ENCODE measurements at regions of chr2 and their contacts with region 1.

Region 1: DNA sequence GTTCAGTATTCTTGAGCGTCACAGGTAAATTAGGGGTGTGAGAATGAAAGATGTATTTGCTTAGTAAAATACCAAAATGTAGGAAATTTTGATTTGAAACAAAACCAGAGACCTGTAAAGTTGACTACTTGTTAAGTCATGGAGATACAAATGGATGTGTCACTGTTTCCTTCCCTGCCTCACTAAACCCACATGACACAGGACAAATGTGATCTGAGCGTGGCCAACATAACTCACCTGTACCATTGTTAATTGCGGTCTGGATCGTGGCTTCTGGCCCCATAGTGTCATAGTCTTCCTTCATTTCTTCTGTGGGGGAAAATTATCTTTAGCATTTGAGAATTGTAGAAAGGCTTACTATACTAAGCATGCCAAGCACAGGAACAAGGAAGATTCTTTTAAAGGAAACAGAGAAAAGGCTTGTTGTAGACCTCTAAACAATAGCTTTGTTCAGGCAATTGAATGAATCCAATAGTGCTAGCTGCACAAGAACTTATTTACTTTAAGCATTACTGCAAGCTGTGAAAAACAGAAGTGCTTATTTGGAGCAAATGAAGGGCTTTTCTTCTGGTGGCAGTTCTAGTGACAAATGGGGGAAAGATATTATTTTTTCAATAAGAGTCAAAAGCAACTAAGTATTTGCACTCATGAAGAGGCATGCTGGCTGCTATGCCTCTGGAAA is 95.2 kb downstream of the ZEB2 start:
- DNase-seq: no peak
- H3K4me3 ChIP-seq: no peak overlapping the region
- CTCF ChIP-seq: no peak
- POLR2A ChIP-seq: no peak

Region 2: GRCh38 chr2:144402251-144402650 is 22.4 kb before region 1 on chr2:
- intact Hi-C with region 1: loop called (anchors 1 kb)
- DNase-seq: no peak
- H3K4me3 ChIP-seq: no peak overlapping the region
- CTCF ChIP-seq: no peak
- POLR2A ChIP-seq: no peak

Measured in lower leg skin (tissue), 4 donors.